ENCODE measurements at regions of chr5 and their contacts with region 1.

Region 1: DNA sequence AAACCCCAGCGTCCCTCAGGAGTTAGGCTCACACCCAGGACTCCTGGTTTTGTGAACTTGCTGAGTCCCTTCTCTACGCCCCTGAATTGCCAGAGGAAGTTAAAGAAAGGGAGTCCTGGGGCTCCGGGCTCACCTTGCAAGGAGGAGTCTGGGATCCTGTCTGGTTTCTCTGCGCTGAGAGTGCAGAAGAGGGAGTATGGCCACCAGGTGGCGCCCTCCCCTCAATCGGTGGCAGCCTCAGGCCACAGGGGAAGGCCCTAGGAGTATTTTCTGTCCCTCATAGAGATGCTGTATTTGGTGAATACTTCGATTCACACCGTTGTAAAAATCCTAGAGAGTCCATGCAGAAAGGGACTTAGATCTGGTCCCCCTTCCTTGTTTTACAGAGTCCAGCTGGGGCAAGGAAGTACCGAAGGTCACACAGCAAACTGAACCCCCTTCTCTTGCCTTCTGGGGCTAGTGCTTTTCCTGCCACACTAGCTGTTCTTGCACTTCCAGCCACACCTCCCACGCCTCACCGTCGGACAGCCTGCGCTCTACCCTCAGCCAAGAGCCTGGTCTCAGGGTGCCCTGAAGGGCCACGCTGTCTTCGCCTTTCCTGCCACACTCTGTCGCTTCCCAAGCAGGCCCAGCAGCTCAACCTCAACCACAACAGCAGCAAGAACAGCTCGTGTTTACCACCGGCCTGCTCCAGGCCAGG is 10.2 kb downstream of the HAND1 start:
- DNase-seq: no peak
- H3K4me3 ChIP-seq: no peak overlapping the region
- H3K27me3 ChIP-seq: peaks cover 21% of the 10 kb centered on the region
- CTCF ChIP-seq: peak; percentile 94

Region 2: DNA sequence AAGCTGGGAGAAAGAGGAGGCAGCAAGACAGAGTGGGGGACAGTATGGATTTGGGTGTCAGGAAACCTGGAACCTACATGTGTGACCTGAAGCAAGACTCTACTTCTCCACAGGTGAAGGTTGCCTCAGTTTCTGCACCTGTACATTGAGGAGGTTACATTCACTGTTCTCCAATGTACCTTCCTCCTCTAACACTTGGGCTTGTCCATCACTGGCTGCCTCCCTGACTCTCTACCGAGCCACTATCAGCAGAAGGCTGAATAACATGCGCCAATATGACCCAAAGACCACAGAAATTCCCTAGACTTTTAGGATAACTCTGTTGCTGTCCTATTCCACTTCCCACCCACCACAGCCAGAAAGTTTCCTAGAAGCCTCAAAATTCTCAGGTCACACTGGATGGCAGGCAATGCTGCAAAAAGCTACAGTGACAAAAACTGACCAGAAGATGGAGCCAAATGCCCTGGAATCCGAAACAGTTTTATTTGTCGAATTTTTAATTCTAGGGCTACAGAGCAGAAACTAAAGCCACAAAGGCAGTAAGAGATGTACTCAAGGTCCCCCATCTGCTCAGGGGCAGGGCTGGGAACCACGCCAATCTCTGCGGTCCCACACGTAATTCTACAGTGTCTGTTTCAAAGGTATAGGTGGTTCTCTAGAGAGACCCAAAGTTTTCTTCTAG is 493.5 kb before region 1 on chr5:
- CTCF ChIA-PET with region 1: interaction called, 10 read pairs
- POLR2A ChIA-PET with region 1: no interaction called
- DNase-seq: no peak
- H3K4me3 ChIP-seq: no peak overlapping the region
- H3K27me3 ChIP-seq: peaks cover 3% of the 10 kb centered on the region; the same call in 1 of the 2 replicates
- CTCF ChIP-seq: peak; percentile 75

Region 3: GRCh38 chr5:154242964-154243376 is 224.8 kb before region 1 on chr5:
- CTCF ChIA-PET with region 1: no interaction called
- POLR2A ChIA-PET with region 1: no interaction called
- DNase-seq: no peak
- H3K4me3 ChIP-seq: no peak overlapping the region
- H3K27me3 ChIP-seq: no peaks in the 10 kb centered on the region
- CTCF ChIP-seq: no peak

Region 4: DNA sequence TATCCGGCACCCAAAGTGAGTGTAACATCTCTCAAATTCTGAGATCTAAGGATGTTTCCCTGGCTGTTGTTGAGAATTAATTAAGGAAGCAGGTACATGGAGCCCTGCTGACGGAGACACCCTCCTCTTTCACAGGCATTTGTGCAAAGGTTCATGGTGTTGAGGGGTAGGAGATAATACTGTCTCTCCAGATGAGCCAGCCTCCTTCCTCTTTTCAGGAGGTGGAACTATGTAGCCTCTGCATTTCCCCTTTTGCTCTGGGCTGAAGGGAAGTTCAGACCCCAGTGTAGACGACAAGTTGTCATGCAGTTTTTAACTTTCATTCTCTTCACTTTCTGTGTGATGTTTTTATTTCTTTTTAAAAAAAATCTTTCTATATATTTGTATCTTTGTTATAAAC is 169.7 kb before region 1 on chr5:
- CTCF ChIA-PET with region 1: no interaction called
- POLR2A ChIA-PET with region 1: no interaction called
- DNase-seq: no peak
- H3K4me3 ChIP-seq: no peak overlapping the region
- H3K27me3 ChIP-seq: no peaks in the 10 kb centered on the region
- CTCF ChIP-seq: no peak

Region 5: GRCh38 chr5:154482528-154483449 is 15.0 kb after region 1 on chr5:
- CTCF ChIA-PET with region 1: interaction called, 14 read pairs
- POLR2A ChIA-PET with region 1: no interaction called
- DNase-seq: no peak
- H3K4me3 ChIP-seq: no peak overlapping the region
- H3K27me3 ChIP-seq: peaks cover 87% of the 10 kb centered on the region
- CTCF ChIP-seq: no peak

Region 6: DNA sequence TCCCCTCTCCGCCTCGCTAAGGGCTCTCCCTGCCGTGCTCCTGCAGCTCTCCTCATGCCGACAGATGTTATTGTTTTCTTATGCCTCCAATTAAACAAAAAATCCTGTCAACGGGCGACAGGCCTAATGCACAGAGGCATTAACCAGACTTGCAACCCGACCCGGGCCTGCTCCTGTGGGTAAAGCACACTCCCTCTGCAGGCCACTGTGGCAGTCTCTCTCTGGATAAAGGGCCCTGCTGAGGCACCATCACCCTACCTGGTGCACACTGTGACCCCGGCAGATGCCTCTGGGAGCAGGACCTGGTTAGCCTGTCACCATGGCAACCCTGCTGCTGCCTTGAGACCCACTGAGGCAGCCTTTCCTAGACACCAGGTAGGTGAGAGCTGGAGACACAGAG is 37.8 kb after region 1 on chr5:
- CTCF ChIA-PET with region 1: no interaction called
- POLR2A ChIA-PET with region 1: no interaction called
- DNase-seq: no peak
- H3K4me3 ChIP-seq: no peak overlapping the region
- H3K27me3 ChIP-seq: peaks cover 8% of the 10 kb centered on the region
- CTCF ChIP-seq: no peak

Region 7: DNA sequence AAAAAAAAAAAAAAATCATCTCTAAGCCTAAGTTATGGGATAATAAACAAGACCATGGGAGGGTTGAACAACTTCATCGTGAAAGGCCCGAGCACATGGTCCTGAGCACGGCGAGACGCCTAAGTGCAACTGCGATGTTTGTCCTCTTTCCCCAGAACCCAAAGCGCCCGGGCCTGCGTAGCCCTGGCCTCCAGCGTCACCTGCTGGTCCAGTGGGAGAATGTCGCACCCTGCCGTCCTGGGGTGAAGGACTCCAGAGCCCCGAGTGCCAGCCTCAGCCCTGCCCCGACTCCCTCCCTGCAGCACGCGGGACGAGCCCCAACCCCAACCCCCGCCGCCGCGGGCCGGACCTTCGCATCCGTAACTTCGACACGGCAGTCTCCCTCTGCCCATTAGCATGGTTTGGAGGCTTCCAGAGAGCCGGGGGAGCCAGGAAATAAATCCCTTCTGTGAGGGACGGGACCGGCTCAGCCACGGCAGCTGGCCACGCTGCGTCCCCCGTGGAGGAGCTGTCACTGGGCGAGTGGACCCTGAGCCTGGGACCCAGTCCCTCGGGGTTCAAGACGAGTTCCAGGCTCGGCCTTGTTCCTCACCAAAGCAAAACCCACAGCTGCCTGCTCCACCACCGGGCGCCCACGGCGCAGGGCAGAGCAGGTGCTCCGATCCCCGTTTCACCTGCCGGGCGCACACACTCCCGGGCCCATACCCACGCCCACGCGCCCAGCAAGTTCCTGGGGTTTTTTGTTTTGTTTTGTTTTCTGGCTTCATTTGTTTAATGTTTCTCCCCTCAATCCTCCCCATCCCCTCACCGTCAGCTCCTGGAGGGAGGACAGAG is 142.7 kb after region 1 on chr5:
- CTCF ChIA-PET with region 1: interaction called, 93 read pairs
- POLR2A ChIA-PET with region 1: no interaction called
- DNase-seq: no peak
- H3K4me3 ChIP-seq: peak overlapping the region; percentile 27
- H3K27me3 ChIP-seq: peaks cover 15% of the 10 kb centered on the region
- CTCF ChIP-seq: peak; percentile 94

Region 8: GRCh38 chr5:154647114-154647760 is 179.4 kb after region 1 on chr5:
- CTCF ChIA-PET with region 1: interaction called, 12 read pairs
- POLR2A ChIA-PET with region 1: no interaction called
- DNase-seq: no peak
- H3K4me3 ChIP-seq: no peak overlapping the region
- H3K27me3 ChIP-seq: no peaks in the 10 kb centered on the region
- CTCF ChIP-seq: no peak

Measured in BJ (cell line).